CD8-positive, alpha-beta memory T cell (primary cell): ENCODE measurements at regions of chr22 and their contacts with region 1.

Region 1: GRCh38 chr22:29040385-29041275 is 21.0 kb downstream of the C22orf31 start:
- DNase-seq: peak; percentile 44 to 66 (median 55)
- H3K4me3 ChIP-seq: no peak overlapping the region
- H3K4me3 Mint-ChIP-seq: no peak overlapping the region
- H3K27ac ChIP-seq: no peak overlapping the region
- H3K27ac Mint-ChIP-seq: no peak overlapping the region
- H3K4me1 ChIP-seq: no peaks in the 10 kb centered on the region
- H3K4me1 Mint-ChIP-seq: no peaks in the 10 kb centered on the region
- H3K27me3 ChIP-seq: peaks cover 5% of the 10 kb centered on the region
- H3K27me3 Mint-ChIP-seq: peaks cover 3 to 4% of the 10 kb centered on the region in 2 donors

Region 2: GRCh38 chr22:28600546-28601143 is 440.0 kb before region 1 on chr22:
- CTCF ChIA-PET with region 1: interaction called, 26 read pairs
- POLR2A ChIA-PET with region 1: no interaction called
- DNase-seq: peak in 2 of 5 donors; percentile 46 to 56
- H3K4me3 ChIP-seq: no peak overlapping the region
- H3K4me3 Mint-ChIP-seq: no peak overlapping the region
- H3K27ac ChIP-seq: no peak overlapping the region
- H3K27ac Mint-ChIP-seq: no peak overlapping the region
- H3K4me1 ChIP-seq: no peaks in the 10 kb centered on the region
- H3K4me1 Mint-ChIP-seq: no peaks in the 10 kb centered on the region
- H3K27me3 ChIP-seq: peaks cover 16% of the 10 kb centered on the region
- H3K27me3 Mint-ChIP-seq: peaks cover 10 to 40% of the 10 kb centered on the region in 2 donors

Region 3: DNA sequence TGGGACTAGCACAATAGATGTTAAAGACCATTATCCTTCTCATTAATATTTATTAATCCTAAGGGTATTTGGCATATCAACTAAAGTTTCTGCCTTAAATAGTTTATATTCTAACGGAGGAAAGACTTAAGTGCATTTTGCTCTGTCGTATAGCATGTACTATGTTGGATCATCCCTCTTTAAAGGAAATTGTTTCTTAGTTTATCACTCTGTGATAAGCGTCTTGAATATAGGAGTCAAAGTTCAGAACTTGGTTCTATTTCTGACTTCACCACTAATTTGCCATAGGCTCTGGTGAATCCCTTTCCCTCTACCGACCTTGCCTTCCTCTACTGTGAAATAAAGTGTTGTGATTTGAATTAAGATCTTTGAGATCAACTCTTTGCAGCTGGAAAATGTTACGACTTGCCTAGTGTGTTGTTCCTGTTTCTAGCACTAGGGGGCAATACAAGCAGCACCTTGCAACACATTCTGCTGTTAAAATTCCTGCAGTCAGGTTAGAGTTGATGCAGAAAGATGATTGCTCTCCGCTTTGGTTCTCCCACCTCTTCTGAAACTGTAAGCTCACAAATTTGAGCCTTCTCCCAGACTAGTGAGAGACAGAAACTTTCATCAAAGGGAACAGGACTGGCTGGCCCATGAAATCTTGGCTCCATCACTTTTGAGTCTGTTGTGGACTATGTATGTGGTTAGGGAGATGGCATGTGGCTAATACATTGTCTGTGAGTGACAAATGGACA is 185.1 kb before region 1 on chr22:
- CTCF ChIA-PET with region 1: interaction called, 63 read pairs
- POLR2A ChIA-PET with region 1: no interaction called
- DNase-seq: peak in 4 of 5 donors; percentile 16 to 57 (median 40)
- H3K4me3 ChIP-seq: no peak overlapping the region
- H3K4me3 Mint-ChIP-seq: no peak overlapping the region
- H3K27ac ChIP-seq: no peak overlapping the region
- H3K27ac Mint-ChIP-seq: no peak overlapping the region
- H3K4me1 ChIP-seq: no peaks in the 10 kb centered on the region
- H3K4me1 Mint-ChIP-seq: no peaks in the 10 kb centered on the region
- H3K27me3 ChIP-seq: no peaks in the 10 kb centered on the region
- H3K27me3 Mint-ChIP-seq: peaks cover 0 to 11% of the 10 kb centered on the region in 2 donors

Region 4: GRCh38 chr22:28869736-28870135 is 170.9 kb before region 1 on chr22:
- CTCF ChIA-PET with region 1: no interaction called
- POLR2A ChIA-PET with region 1: no interaction called
- DNase-seq: no peak
- H3K4me3 ChIP-seq: no peak overlapping the region
- H3K4me3 Mint-ChIP-seq: no peak overlapping the region
- H3K27ac ChIP-seq: no peak overlapping the region
- H3K27ac Mint-ChIP-seq: no peak overlapping the region
- H3K4me1 ChIP-seq: no peaks in the 10 kb centered on the region
- H3K4me1 Mint-ChIP-seq: peaks cover 0 to 10% (median 8%) of the 10 kb centered on the region in 3 donors
- H3K27me3 ChIP-seq: no peaks in the 10 kb centered on the region
- H3K27me3 Mint-ChIP-seq: peaks cover 8 to 13% of the 10 kb centered on the region in 2 donors

Region 5: DNA sequence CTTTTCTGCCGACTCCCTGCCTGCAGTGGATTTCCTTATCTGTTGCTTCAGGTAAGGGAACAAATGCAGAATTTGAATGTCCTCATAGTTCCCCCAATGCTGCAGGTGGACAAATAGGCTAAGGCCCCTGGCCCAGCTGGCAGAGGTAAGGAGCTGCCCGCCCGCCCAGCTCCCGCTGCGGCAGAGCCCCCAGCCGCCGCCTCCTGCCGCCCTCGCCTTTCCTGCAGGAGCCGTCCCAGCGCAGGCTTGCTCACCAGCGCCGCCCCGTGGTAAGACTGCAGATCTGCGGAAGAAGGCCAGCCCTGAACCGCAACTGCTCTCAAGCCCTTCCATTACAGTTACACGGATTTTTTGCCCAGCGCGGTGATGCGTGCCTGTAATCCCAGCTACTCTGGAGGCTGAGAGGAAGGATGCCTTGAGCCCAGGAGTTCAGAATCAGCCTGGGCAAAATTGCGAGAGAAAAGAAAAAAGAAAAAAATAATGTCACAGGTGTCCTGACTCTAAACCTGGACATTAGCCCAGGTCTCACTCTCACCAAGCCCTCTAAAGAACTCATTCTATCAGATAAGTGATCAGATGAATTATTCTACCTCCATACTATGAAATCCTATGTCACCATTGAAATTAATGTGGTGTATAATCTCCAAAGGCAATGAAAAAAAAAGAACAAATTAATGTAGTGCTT is 113.9 kb after region 1 on chr22:
- CTCF ChIA-PET with region 1: no interaction called
- POLR2A ChIA-PET with region 1: no interaction called
- DNase-seq: peak; percentile 25 to 68 (median 51)
- H3K4me3 ChIP-seq: no peak overlapping the region
- H3K4me3 Mint-ChIP-seq: no peak overlapping the region
- H3K27ac ChIP-seq: no peak overlapping the region
- H3K27ac Mint-ChIP-seq: peak overlapping the region in 1 of 8 donors; percentile 26
- H3K4me1 ChIP-seq: peaks cover 8% of the 10 kb centered on the region
- H3K4me1 Mint-ChIP-seq: peaks cover 5 to 8% (median 8%) of the 10 kb centered on the region in 3 donors
- H3K27me3 ChIP-seq: no peaks in the 10 kb centered on the region
- H3K27me3 Mint-ChIP-seq: peaks cover 18 to 58% of the 10 kb centered on the region in 2 donors